Gastrocnemius medialis (tissue), 4 donors: ENCODE measurements at regions of chrX and their contacts with region 1.

Region 1: DNA sequence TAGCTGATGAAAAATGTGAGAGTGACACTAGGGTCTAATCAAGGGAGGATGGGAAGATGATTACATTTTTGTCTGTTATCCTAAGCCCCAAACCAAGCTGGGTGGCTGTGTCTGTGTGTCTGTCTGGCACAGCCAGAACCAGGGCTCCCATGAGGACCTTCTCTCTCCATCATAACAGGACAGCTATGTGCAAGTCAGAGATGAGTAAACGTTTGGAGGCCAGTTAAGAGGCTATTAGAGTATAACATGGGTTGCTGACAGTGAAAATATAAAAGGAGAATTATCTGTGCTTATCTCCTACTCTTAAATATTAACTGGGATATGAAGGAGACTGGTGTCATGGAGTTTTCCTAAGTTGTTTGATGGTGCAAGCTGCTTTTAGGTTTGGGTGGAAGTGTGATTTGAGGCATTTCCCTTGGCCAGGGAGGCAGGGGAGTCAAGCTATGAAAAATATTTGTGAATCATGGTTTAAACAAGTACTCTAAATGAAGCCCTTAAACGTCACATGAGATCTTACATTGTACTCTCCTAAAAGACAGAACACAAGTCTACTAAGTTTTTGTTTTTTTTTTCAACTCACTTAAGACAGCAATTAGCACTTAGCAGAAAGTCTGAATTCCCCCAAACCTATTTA is 156.2 kb downstream of the ENOX2 start:
- DNase-seq: no peak
- ATAC-seq: no peak
- H3K4me3 ChIP-seq: no peak overlapping the region
- H3K27ac ChIP-seq: no peak overlapping the region
- H3K4me1 ChIP-seq: no peaks in the 10 kb centered on the region
- H3K27me3 ChIP-seq: no peaks in the 10 kb centered on the region
- CTCF ChIP-seq: no peak
- POLR2A ChIP-seq: no peak

Region 2: GRCh38 chrX:130626521-130626920 is 120.3 kb before region 1 on chrX:
- in situ Hi-C with region 1: no loop called
- intact Hi-C with region 1: no loop called
- DNase-seq: no peak
- ATAC-seq: no peak
- H3K4me3 ChIP-seq: no peak overlapping the region
- H3K27ac ChIP-seq: no peak overlapping the region
- H3K4me1 ChIP-seq: no peaks in the 10 kb centered on the region
- H3K27me3 ChIP-seq: no peaks in the 10 kb centered on the region
- CTCF ChIP-seq: no peak
- POLR2A ChIP-seq: no peak

Region 3: DNA sequence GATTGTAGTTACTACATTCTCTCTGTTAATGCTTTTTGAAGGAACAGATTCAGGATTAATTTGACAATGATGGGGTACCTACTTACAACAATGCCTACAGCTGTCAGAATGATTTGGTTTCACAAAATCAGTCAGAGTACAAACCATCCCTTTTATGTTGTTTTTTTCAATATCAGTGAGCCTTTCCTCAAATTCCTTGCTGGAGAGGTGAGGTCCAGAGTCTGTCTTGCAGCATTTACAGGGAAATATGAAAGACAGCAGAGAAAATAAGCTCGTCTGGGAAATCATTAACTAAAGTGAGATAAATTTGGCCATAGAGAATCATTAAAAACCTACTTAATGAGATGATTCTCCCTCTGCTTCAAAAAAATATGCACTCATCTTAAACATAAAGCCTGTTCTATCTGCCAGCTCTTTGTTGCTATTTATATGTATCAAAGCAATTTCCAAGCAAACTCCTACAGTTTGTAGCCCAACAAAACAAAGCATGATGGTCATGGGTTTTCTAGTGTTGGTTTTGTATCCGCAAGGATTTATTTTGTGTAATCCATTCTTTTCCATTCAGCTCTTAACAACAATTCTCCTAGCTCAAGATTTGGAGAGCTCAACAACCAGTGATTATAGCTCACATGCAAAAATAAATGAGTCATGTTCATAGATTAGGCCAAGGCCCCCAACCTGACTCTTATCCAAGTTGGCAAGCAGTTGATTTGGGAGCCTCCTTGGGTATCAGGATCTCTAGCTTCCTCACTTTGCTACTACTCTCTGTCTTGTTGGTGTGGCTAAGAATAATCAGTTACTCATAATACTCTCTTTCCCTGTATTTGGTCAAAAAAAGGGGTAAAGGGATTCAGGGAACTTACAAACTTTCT is 66.4 kb before region 1 on chrX:
- in situ Hi-C with region 1: no loop called
- intact Hi-C with region 1: loop called (anchors 10 kb)
- DNase-seq: no peak
- ATAC-seq: no peak
- H3K4me3 ChIP-seq: no peak overlapping the region
- H3K27ac ChIP-seq: no peak overlapping the region
- H3K4me1 ChIP-seq: no peaks in the 10 kb centered on the region
- H3K27me3 ChIP-seq: no peaks in the 10 kb centered on the region
- CTCF ChIP-seq: no peak
- POLR2A ChIP-seq: no peak

Region 4: GRCh38 chrX:130772105-130772775 is 25.4 kb after region 1 on chrX:
- in situ Hi-C with region 1: no loop called
- intact Hi-C with region 1: no loop called
- DNase-seq: peak; percentile 23 to 28
- ATAC-seq: peak; percentile 85 to 88
- H3K4me3 ChIP-seq: no peak overlapping the region
- H3K27ac ChIP-seq: peak overlapping the region; percentile 58 to 80 (median 72)
- H3K4me1 ChIP-seq: peaks cover 4 to 39% of the 10 kb centered on the region in 2 donors
- H3K27me3 ChIP-seq: no peaks in the 10 kb centered on the region
- CTCF ChIP-seq: no peak
- POLR2A ChIP-seq: no peak

Region 5: DNA sequence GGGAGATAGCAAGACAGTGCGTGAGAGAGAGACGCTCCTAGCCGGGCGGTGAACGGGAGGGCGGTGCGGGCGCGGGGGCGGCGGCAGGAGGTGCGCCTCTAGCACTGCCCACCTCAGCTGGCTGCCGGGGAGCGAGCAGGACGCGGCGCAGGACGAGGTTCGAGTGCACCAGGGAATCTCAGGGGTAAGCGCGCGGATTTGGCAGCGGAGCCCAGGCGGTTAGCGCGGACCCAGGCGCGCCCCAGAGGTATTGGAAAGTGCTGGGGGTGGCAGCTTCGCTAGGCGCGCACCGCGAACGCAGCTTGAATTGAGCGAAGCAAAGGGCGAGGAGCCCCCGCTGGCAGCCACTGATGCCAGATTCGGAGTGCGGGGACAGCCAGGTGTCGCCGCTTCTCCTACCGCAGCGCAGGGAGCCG is 335.5 kb after region 1 on chrX:
- in situ Hi-C with region 1: no loop called
- intact Hi-C with region 1: no loop called
- DNase-seq: no peak
- ATAC-seq: no peak
- H3K4me3 ChIP-seq: peak overlapping the region in 1 of 4 donors; percentile 20
- H3K27ac ChIP-seq: no peak overlapping the region
- H3K4me1 ChIP-seq: no peaks in the 10 kb centered on the region
- H3K27me3 ChIP-seq: peaks cover 17 to 50% (median 38%) of the 10 kb centered on the region in 3 donors
- CTCF ChIP-seq: no peak
- POLR2A ChIP-seq: no peak